ENCODE measurements at regions of chr17 and their contacts with region 1.

Region 1: GRCh38 chr17:7589204-7589868 is 558 bp downstream of the SOX15 start:
- DNase-seq: peak; percentile 78
- H3K4me3 ChIP-seq: no peak overlapping the region
- H3K27ac ChIP-seq: no peak overlapping the region
- H3K4me1 ChIP-seq: peaks cover 16% of the 10 kb centered on the region
- H3K27me3 ChIP-seq: no peaks in the 10 kb centered on the region
- CTCF ChIP-seq: peak; percentile 94 to 95
- POLR2A ChIP-seq: no peak

Region 2: GRCh38 chr17:7509937-7510336 is 79.4 kb before region 1 on chr17:
- CTCF ChIA-PET with region 1: interaction called, 23 read pairs
- POLR2A ChIA-PET with region 1: interaction called, 4 read pairs
- dilution Hi-C with region 1: no loop called
- intact Hi-C with region 1: loop called (anchors 1 kb)
- DNase-seq: no peak
- H3K4me3 ChIP-seq: no peak overlapping the region
- H3K27ac ChIP-seq: no peak overlapping the region
- H3K4me1 ChIP-seq: no peaks in the 10 kb centered on the region
- H3K27me3 ChIP-seq: no peaks in the 10 kb centered on the region
- CTCF ChIP-seq: no peak
- POLR2A ChIP-seq: no peak

Region 3: GRCh38 chr17:7515911-7516610 is 73.3 kb before region 1 on chr17:
- CTCF ChIA-PET with region 1: interaction called, 23 read pairs
- POLR2A ChIA-PET with region 1: interaction called, 4 read pairs
- dilution Hi-C with region 1: no loop called
- intact Hi-C with region 1: loop called (anchors 1 kb)
- DNase-seq: no peak
- H3K4me3 ChIP-seq: no peak overlapping the region
- H3K27ac ChIP-seq: no peak overlapping the region
- H3K4me1 ChIP-seq: no peaks in the 10 kb centered on the region
- H3K27me3 ChIP-seq: no peaks in the 10 kb centered on the region
- CTCF ChIP-seq: no peak
- POLR2A ChIP-seq: no peak

Region 4: GRCh38 chr17:7572588-7573323 is 16.6 kb before region 1 on chr17:
- CTCF ChIA-PET with region 1: interaction called, 48 read pairs
- POLR2A ChIA-PET with region 1: interaction called, 5 read pairs
- dilution Hi-C with region 1: no loop called
- intact Hi-C with region 1: loop called (anchors 1 kb)
- DNase-seq: peak; percentile 100
- H3K4me3 ChIP-seq: peak overlapping the region; percentile 86 to 96 (median 87)
- H3K27ac ChIP-seq: peak overlapping the region; percentile 91
- H3K4me1 ChIP-seq: peaks cover 43% of the 10 kb centered on the region
- H3K27me3 ChIP-seq: no peaks in the 10 kb centered on the region
- CTCF ChIP-seq: no peak
- POLR2A ChIP-seq: peak; percentile 99

Region 5: GRCh38 chr17:7606280-7606679 is 16.9 kb after region 1 on chr17:
- CTCF ChIA-PET with region 1: interaction called, 14 read pairs
- POLR2A ChIA-PET with region 1: no interaction called
- dilution Hi-C with region 1: no loop called
- intact Hi-C with region 1: no loop called
- DNase-seq: no peak
- H3K4me3 ChIP-seq: no peak overlapping the region
- H3K27ac ChIP-seq: no peak overlapping the region
- H3K4me1 ChIP-seq: no peaks in the 10 kb centered on the region
- H3K27me3 ChIP-seq: no peaks in the 10 kb centered on the region
- CTCF ChIP-seq: no peak
- POLR2A ChIP-seq: no peak

Region 6: DNA sequence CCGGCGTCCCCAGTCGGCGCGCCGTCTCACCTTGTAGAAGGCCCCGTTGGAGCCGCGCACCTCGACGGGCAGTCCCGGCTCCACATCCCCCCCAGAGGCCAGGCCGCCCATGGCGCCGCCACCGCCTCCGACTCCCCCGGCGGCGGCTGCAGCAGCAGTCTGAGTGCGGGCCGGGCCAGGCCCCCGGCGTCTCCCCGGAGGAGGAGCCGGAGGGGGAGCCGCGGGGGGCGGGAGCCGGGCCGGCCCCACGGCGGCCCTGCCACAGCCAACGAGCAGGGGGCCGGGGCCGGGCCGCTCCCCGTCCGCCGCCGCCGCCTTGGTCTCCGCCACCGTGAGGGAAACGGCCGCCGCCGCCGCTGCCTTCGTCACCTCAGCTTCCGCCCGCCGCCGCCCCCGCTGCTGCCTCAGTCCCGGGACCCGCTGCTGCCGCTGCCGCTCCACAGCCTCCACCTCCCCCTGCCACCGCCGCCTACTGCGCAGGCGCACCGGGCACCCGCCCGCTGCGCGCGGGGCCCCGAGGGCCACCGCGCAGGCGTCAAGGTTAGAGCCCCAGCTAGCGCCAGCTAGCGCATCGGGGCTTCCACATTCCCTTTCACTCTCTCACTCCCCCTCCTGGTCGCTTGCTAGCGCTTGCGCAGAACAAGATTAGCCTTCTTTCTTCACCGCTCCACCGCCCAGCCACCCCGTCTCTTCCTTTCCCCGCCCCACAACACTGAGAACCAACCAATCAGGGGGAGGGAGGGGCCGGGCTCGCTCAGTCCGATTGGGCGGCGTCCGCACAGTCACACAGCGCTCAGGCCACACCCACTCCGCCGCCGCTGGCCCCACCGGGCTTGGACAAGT is 25.3 kb after region 1 on chr17 and contains the start of gene FXR2:
- CTCF ChIA-PET with region 1: interaction called, 6 read pairs
- POLR2A ChIA-PET with region 1: no interaction called
- dilution Hi-C with region 1: no loop called
- intact Hi-C with region 1: loop called (anchors 2 kb)
- DNase-seq: peak; percentile 100
- H3K4me3 ChIP-seq: peak within 1 kb of the TSS; percentile 55 to 97 (median 73)
- H3K27ac ChIP-seq: peak within 1 kb of the TSS; percentile 56
- H3K4me1 ChIP-seq: peaks cover 24% of the 10 kb centered on the region
- H3K27me3 ChIP-seq: no peaks in the 10 kb centered on the region
- CTCF ChIP-seq: peak; percentile 68 to 79
- POLR2A ChIP-seq: peak; percentile 67
- total RNA-seq, gene FXR2: 33.1 and 40.1 TPM in 2 replicates